Esophagus squamous epithelium (tissue), 5 donors: ENCODE measurements at regions of chr16 and their contacts with region 1.

Region 1: GRCh38 chr16:68444056-68444657 is 4.2 kb downstream of the SMPD3 start:
- DNase-seq: no peak
- H3K4me3 ChIP-seq: no peak overlapping the region
- H3K27ac ChIP-seq: no peak overlapping the region
- H3K4me1 ChIP-seq: peaks cover 11 to 29% (median 15%) of the 10 kb centered on the region in 3 donors
- H3K27me3 ChIP-seq: peaks cover 0 to 89% (median 5%) of the 10 kb centered on the region in 4 donors
- CTCF ChIP-seq: no peak
- POLR2A ChIP-seq: no peak

Region 2: GRCh38 chr16:68506331-68507053 is 62.3 kb after region 1 on chr16:
- intact Hi-C with region 1: loop called (anchors 5 kb)
- DNase-seq: no peak
- H3K4me3 ChIP-seq: no peak overlapping the region
- H3K27ac ChIP-seq: no peak overlapping the region
- H3K4me1 ChIP-seq: peaks cover 0 to 8% (median 4%) of the 10 kb centered on the region in 3 donors
- H3K27me3 ChIP-seq: peaks cover 0 to 76% (median 0%) of the 10 kb centered on the region in 4 donors
- CTCF ChIP-seq: no peak
- POLR2A ChIP-seq: no peak

Region 3: DNA sequence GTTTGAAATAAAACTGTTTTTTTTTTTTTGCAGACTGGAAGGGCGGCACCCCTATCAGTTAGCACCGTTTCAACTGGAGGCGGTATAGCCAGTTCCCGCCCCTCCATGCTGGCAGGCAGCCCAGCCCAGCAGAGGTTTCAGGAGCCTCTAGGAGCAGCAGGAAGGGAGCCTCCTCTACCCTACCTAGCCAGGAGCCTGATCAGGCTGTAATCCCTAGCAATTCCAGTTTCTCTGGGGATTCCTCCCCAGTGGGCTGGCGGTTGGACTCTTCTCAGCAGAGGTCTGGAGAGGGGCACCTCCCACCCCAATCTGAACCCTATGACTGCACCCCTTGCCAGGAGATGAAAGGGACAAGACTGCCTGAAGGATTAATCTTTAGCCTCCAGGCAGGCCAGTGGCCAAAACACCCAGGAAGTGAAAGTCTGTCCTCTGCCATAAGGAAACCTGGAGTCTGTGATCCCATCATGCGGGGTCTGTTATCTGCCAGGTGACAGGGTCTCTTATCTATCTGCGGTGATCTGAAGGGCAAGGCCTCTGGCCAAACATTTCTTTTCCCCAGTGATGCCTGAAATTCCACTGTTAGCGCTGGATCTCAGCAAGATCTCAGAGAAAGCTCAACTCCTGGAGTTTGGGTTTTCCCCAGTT is 288.0 kb after region 1 on chr16:
- intact Hi-C with region 1: no loop called
- DNase-seq: no peak
- H3K4me3 ChIP-seq: no peak overlapping the region
- H3K27ac ChIP-seq: peak overlapping the region; percentile 44 to 75 (median 50)
- H3K4me1 ChIP-seq: peaks cover 6 to 24% (median 10%) of the 10 kb centered on the region in 3 donors
- H3K27me3 ChIP-seq: peaks cover 0 to 31% (median 2%) of the 10 kb centered on the region in 4 donors
- CTCF ChIP-seq: peak in 1 of 6 experiments; percentile 7
- POLR2A ChIP-seq: no peak